Activated CD8-positive, alpha-beta T cell treated with anti-CD3 and anti-CD28 coated beads, Interleukin-2, amount 10 ng/mL, durations not matched to agents 7 days and 5 days (primary cell): ENCODE measurements at regions of chr1 and their contacts with region 1.

Region 1: GRCh38 chr1:111507411-111508201 is 4.2 kb upstream of the ADORA3 start:
- DNase-seq: peak; percentile 82
- ATAC-seq: peak; percentile 66
- H3K4me3 Mint-ChIP-seq: peak overlapping the region; percentile 69
- H3K27ac Mint-ChIP-seq: peak overlapping the region; percentile 92
- H3K4me1 Mint-ChIP-seq: peaks cover 57% of the 10 kb centered on the region
- H3K27me3 Mint-ChIP-seq: no peaks in the 10 kb centered on the region

Region 2: GRCh38 chr1:111222308-111223125 is 285.1 kb before region 1 on chr1:
- CTCF ChIA-PET with region 1: interaction called, 12 read pairs
- POLR2A ChIA-PET with region 1: interaction called, 3 read pairs
- DNase-seq: peak; percentile 88
- ATAC-seq: peak; percentile 43
- H3K4me3 Mint-ChIP-seq: peak overlapping the region; percentile 65
- H3K27ac Mint-ChIP-seq: peak overlapping the region; percentile 89
- H3K4me1 Mint-ChIP-seq: peaks cover 93% of the 10 kb centered on the region
- H3K27me3 Mint-ChIP-seq: no peaks in the 10 kb centered on the region

Region 3: GRCh38 chr1:111481387-111482221 is 26.0 kb before region 1 on chr1:
- CTCF ChIA-PET with region 1: interaction called, 144 read pairs
- POLR2A ChIA-PET with region 1: interaction called, 23 read pairs
- DNase-seq: peak; percentile 77
- ATAC-seq: peak; percentile 61
- H3K4me3 Mint-ChIP-seq: no peak overlapping the region
- H3K27ac Mint-ChIP-seq: peak overlapping the region; percentile 40
- H3K4me1 Mint-ChIP-seq: peaks cover 37% of the 10 kb centered on the region
- H3K27me3 Mint-ChIP-seq: no peaks in the 10 kb centered on the region

Region 4: GRCh38 chr1:111570781-111571181 is 63.2 kb after region 1 on chr1:
- CTCF ChIA-PET with region 1: interaction called, 11 read pairs
- POLR2A ChIA-PET with region 1: no interaction called
- DNase-seq: peak; percentile 50
- ATAC-seq: no peak
- H3K4me3 Mint-ChIP-seq: no peak overlapping the region
- H3K27ac Mint-ChIP-seq: no peak overlapping the region
- H3K4me1 Mint-ChIP-seq: peaks cover 19% of the 10 kb centered on the region
- H3K27me3 Mint-ChIP-seq: no peaks in the 10 kb centered on the region

Region 5: DNA sequence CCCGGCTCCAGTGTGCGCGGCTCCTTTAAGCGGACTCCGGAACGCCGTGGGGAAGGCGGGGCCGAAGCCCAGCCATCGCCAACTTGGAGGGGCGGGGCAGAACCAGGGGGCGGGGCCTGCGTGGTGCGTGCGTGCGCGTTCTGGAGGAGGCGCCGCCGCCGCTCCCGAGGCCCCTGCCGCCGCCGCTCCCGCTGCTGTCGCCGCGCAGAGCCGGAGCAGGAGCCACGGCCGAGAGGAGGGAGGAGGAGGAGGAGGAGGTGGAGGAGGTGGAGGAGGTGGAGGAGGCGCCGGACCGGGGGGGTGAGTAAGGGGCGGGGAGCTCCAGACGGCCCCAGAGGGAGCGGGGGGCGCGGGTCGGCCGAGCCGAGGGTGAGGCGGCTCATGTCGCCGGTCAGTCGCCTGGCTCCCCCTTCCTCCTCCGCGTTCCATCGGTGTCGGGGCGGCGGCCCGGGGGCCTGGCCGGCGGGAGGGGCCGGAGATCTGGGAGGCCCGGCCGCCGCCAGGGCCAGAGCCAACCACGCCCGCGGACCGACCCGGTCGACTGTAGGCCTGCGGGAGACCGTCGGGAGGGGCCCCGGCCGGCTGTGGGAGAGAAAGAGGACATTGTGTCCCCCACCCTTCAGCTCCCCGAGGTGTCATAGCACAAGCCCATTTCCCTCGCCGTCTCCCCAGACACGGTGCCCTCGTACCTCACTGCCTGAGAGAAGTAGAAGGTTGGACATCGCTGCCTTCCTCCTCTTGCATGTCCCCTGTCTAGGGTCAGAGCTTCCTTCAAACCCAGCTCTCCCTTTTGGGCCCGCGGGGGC is 112.2 kb after region 1 on chr1 and contains the start of gene RAP1A:
- CTCF ChIA-PET with region 1: interaction called, 42 read pairs
- POLR2A ChIA-PET with region 1: interaction called, 41 read pairs
- DNase-seq: peak; percentile 96
- ATAC-seq: peak; percentile 77
- H3K4me3 Mint-ChIP-seq: peak within 1 kb of the TSS; percentile 95
- H3K27ac Mint-ChIP-seq: peak within 1 kb of the TSS; percentile 92
- H3K4me1 Mint-ChIP-seq: peaks cover 69% of the 10 kb centered on the region
- H3K27me3 Mint-ChIP-seq: no peaks in the 10 kb centered on the region
- total RNA-seq, gene RAP1A: 132 to 133 TPM

Region 6: GRCh38 chr1:111679541-111679940 is 171.9 kb after region 1 on chr1:
- CTCF ChIA-PET with region 1: interaction called, 11 read pairs
- POLR2A ChIA-PET with region 1: interaction called, 3 read pairs
- DNase-seq: no peak
- ATAC-seq: no peak
- H3K4me3 Mint-ChIP-seq: no peak overlapping the region
- H3K27ac Mint-ChIP-seq: no peak overlapping the region
- H3K4me1 Mint-ChIP-seq: no peaks in the 10 kb centered on the region
- H3K27me3 Mint-ChIP-seq: no peaks in the 10 kb centered on the region

Region 7: DNA sequence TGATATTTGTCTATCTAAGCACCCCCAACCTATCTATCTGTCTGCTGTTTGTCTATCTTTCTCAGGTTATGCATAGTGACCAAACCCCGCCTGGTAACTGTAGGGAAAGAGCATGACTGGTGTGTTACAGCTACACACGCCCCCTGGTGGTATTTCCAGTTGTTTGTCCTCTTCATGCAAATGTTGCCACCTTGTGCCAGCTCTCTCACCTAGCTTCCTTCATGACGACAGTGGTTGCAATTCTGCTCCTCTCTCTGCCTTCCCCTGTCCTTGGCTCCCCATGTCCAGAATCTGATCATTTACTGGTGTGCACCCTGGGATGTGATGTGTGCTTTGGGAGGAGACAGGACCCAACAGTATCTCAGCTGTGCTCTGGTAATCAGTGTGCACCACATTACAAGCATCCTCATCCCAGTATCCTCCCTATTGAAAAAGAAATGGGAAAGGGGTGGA is 239.7 kb after region 1 on chr1:
- CTCF ChIA-PET with region 1: interaction called, 79 read pairs
- POLR2A ChIA-PET with region 1: interaction called, 7 read pairs
- DNase-seq: peak; percentile 89
- ATAC-seq: peak; percentile 91
- H3K4me3 Mint-ChIP-seq: no peak overlapping the region
- H3K27ac Mint-ChIP-seq: no peak overlapping the region
- H3K4me1 Mint-ChIP-seq: peaks cover 25% of the 10 kb centered on the region
- H3K27me3 Mint-ChIP-seq: peaks cover 17% of the 10 kb centered on the region